ENCODE measurements at regions of chr7 and their contacts with region 1.

Region 1: GRCh38 chr7:25093268-25093826 is 31.7 kb downstream of the CYCS start:
- DNase-seq: peak; percentile 83
- H3K4me3 ChIP-seq: no peak overlapping the region
- H3K27ac ChIP-seq: no peak overlapping the region
- H3K4me1 ChIP-seq: peaks cover 0 to 6% of the 10 kb centered on the region in 2 experiments; a peak in 1 of 4 replicates
- H3K27me3 ChIP-seq: no peaks in the 10 kb centered on the region
- CTCF ChIP-seq: peak; percentile 99
- EP300 ChIP-seq: no peak
- RAD21 ChIP-seq: peak; percentile 81

Region 2: GRCh38 chr7:24764972-24765744 is 328.2 kb before region 1 on chr7:
- CTCF ChIA-PET with region 1: interaction called, 10 read pairs
- POLR2A ChIA-PET with region 1: no interaction called
- DNase-seq: peak; percentile 61
- H3K4me3 ChIP-seq: no peak overlapping the region
- H3K27ac ChIP-seq: no peak overlapping the region
- H3K4me1 ChIP-seq: peaks cover 0 to 13% of the 10 kb centered on the region in 2 experiments; a peak in 2 of 4 replicates
- H3K27me3 ChIP-seq: no peaks in the 10 kb centered on the region
- CTCF ChIP-seq: no peak
- EP300 ChIP-seq: no peak; a peak in 1 of 4 replicates
- RAD21 ChIP-seq: 0 out of 2 replicates have a peak, but pooled peaks have one; percentile 4

Region 3: DNA sequence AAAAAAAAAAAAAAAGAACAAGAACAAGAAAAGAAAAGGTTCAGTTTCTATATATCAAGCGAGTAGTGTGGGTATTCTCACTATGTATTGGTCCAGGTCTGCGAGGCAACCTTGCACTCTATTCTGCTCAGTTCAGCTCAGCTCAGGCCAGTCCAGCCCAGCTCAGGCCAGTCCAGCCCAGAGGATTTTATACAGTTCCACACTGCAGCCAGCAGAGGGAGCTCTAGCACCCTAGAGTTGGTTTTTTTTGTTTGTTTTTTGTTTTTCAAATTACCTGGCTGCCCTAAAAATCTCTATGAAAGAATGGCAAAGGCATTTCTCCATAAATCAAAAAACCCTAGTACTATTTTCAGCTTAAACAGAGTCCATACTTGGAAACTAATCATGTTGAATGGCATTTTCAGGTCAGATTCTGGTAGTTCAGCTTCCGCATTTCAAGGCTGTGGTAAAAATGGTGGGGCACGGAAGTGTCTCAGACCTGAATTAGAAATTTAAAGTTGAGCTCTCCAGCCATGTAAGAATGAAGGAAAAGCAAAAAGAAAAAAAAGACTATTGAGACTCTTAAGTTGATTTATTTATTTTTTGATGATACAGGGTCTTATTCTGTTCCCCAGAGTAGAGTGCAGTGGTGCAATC is 280.9 kb before region 1 on chr7:
- CTCF ChIA-PET with region 1: interaction called, 396 read pairs
- POLR2A ChIA-PET with region 1: interaction called, 5 read pairs
- DNase-seq: peak; percentile 67
- H3K4me3 ChIP-seq: no peak overlapping the region; a peak in 1 of 4 replicates
- H3K27ac ChIP-seq: no peak overlapping the region
- H3K4me1 ChIP-seq: peaks cover 0 to 4% of the 10 kb centered on the region in 2 experiments; a peak in 1 of 4 replicates
- H3K27me3 ChIP-seq: no peaks in the 10 kb centered on the region
- CTCF ChIP-seq: peak; percentile 100
- EP300 ChIP-seq: no peak
- RAD21 ChIP-seq: peak; percentile 75

Region 4: DNA sequence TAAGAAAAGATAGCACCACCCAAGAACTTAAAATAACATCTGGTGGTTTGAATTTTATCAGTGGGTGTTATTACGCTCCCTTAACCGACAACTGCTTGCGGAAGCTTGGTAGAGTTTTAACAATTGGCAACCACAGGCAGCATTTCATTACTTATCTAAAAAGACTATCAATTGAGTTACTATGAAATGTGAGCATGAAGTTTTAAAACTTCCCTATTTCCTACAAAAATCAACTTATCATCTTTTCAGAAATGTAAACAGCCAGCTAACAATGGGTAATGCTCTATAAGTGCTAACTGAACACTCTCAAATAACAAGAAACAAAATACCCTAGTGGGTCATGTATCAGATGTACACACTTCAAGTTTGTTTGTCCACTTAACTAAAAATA is 182.1 kb before region 1 on chr7:
- CTCF ChIA-PET with region 1: interaction called, 10 read pairs
- POLR2A ChIA-PET with region 1: no interaction called
- DNase-seq: no peak
- H3K4me3 ChIP-seq: no peak overlapping the region
- H3K27ac ChIP-seq: peak overlapping the region in 1 of 2 experiments; percentile 6; a peak in 2 of 4 replicates
- H3K4me1 ChIP-seq: peaks cover 17 to 40% of the 10 kb centered on the region in 2 experiments
- H3K27me3 ChIP-seq: no peaks in the 10 kb centered on the region
- CTCF ChIP-seq: no peak
- EP300 ChIP-seq: no peak
- RAD21 ChIP-seq: no peak

Region 5: GRCh38 chr7:25069900-25070443 is 23.4 kb before region 1 on chr7:
- CTCF ChIA-PET with region 1: interaction called, 115 read pairs
- POLR2A ChIA-PET with region 1: no interaction called
- DNase-seq: peak; percentile 83
- H3K4me3 ChIP-seq: peak overlapping the region in 1 of 2 experiments; percentile 30; a peak in 1 of 4 replicates
- H3K27ac ChIP-seq: no peak overlapping the region
- H3K4me1 ChIP-seq: no peaks in the 10 kb centered on the region
- H3K27me3 ChIP-seq: no peaks in the 10 kb centered on the region
- CTCF ChIP-seq: peak; percentile 99
- EP300 ChIP-seq: no peak
- RAD21 ChIP-seq: peak; percentile 93

Region 6: DNA sequence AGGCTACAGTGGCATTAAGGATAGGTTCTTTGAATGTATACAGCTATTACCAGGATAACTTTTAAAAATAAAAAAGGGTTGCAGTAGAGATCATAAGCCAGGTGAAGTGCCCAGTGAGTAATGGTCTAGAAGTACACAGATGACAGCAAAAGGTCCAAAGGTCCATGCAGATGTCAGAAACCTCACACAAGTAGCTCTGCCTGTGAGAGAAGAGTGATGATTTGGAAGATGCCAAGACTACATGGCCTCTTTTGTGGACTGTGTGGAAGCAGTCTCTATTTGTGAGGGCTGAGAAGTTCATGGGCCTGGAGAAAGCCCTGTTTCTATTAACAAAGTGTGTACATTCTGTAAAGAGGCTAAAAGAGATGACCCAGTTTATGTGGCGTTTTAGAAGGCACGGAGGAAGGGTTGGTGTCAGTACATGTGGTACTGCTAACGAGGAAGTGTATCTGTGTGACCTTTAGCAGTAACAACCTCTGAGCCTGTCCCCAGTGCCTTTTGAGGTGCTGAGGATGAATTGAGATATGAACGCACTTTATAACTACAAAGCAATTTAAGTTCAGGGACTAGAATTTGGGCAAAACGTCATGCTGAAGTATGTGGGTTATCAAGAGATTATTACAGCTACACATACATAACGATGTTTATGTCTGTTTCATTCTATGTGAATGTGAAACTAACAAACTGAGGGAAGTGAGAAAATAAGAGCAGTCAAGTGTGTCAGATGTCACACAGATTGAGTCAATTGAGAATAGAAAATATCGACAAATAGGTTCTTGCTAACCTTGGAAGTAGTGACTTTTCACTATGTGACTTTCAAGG is 24.1 kb after region 1 on chr7:
- CTCF ChIA-PET with region 1: interaction called, 68 read pairs
- POLR2A ChIA-PET with region 1: no interaction called
- DNase-seq: no peak
- H3K4me3 ChIP-seq: no peak overlapping the region
- H3K27ac ChIP-seq: no peak overlapping the region
- H3K4me1 ChIP-seq: peaks cover 0 to 4% of the 10 kb centered on the region in 2 experiments; a peak in 1 of 4 replicates
- H3K27me3 ChIP-seq: no peaks in the 10 kb centered on the region
- CTCF ChIP-seq: no peak
- EP300 ChIP-seq: no peak
- RAD21 ChIP-seq: no peak

Region 7: GRCh38 chr7:25297278-25297677 is 203.9 kb after region 1 on chr7:
- CTCF ChIA-PET with region 1: no interaction called
- POLR2A ChIA-PET with region 1: no interaction called
- DNase-seq: no peak
- H3K4me3 ChIP-seq: no peak overlapping the region
- H3K27ac ChIP-seq: no peak overlapping the region
- H3K4me1 ChIP-seq: no peaks in the 10 kb centered on the region
- H3K27me3 ChIP-seq: no peaks in the 10 kb centered on the region
- CTCF ChIP-seq: no peak
- EP300 ChIP-seq: no peak
- RAD21 ChIP-seq: no peak

Measured in SK-N-SH (cell line).